ENCODE measurements at regions of chr12 and their contacts with region 1.

Region 1: DNA sequence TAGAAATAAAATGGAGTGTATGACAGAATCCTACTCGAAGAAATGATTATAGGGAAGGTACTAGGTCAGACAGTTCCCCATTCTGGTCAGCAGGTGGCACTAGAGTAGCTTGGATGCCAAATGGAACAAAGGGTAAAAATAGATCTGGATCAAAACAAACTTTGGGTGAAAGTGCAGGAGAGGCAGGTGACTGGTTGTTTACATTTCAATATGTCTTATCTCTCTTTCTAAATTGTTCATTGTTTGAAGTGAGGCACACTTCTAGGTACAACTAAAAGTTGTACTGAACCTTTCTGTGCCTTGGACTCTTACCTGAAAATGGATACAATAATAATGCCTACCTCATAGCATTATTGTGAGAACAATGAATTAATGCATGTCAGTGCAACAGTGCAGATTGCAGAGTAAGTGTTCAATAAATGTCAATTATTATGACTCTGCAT is 62.0 kb upstream of the OSBPL8 start:
- DNase-seq: peak; percentile 93
- ATAC-seq: peak; percentile 92
- H3K4me3 ChIP-seq: no peak overlapping the region; a peak in 1 of 6 replicates
- H3K27ac ChIP-seq: no peak overlapping the region
- H3K4me1 ChIP-seq: peaks cover 17% of the 10 kb centered on the region
- H3K27me3 ChIP-seq: no peaks in the 10 kb centered on the region
- CTCF ChIP-seq: peak; percentile 89
- EP300 ChIP-seq: peak in 1 of 2 experiments; percentile 82; a peak in 3 of 4 replicates
- POLR2A ChIP-seq: no peak
- RAD21 ChIP-seq: peak; percentile 92

Region 2: GRCh38 chr12:76763743-76764675 is 142.4 kb after region 1 on chr12 and contains the start of gene ZDHHC17:
- CTCF ChIA-PET with region 1: no interaction called
- POLR2A ChIA-PET with region 1: no interaction called
- in situ Hi-C with region 1: no loop called
- intact Hi-C with region 1: loop called (anchors 1 kb)
- DNase-seq: peak; percentile 87
- ATAC-seq: peak; percentile 95
- H3K4me3 ChIP-seq: peak within 1 kb of the TSS; percentile 74 to 90 (median 79)
- H3K27ac ChIP-seq: peak within 1 kb of the TSS; percentile 90
- H3K4me1 ChIP-seq: peaks cover 45% of the 10 kb centered on the region
- H3K27me3 ChIP-seq: no peaks in the 10 kb centered on the region; a peak in 1 of 5 replicates
- CTCF ChIP-seq: peak; percentile 6; the same call in 1 of the 2 replicates
- EP300 ChIP-seq: no peak
- POLR2A ChIP-seq: peak; percentile 86 to 90
- RAD21 ChIP-seq: peak; percentile 18; the same call in 1 of the 2 replicates
- total RNA-seq, gene ZDHHC17: 21.2 and 36.7 TPM in 2 replicates

Region 3: DNA sequence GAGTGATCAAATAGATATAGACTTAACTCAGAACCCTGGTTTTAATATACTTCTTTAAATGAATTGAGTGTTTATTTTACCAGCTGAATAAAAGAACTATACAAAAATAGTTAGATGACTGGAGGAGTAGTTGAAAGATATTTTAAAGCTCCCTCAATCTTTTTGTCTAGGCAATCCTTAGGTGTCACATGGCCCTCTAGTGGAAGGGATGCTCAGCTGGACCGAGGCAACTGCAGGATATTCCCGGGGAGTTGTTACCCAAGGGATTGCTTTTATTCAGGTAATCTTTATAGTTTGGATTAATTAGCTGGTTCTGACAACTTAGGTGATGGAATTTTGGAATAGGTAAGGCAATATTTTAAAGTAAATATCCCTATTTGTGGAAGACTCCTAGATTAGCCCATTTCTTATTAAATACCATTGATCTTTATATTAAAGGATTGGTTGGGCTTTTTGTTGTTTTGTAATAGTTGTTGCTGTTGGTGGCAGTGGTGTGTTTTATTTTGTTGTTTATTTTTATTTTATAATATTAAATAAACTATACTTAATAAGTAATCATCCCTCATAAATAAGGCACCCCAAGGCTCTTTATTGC is 199.4 kb after region 1 on chr12:
- CTCF ChIA-PET with region 1: interaction called, 8 read pairs
- POLR2A ChIA-PET with region 1: no interaction called
- in situ Hi-C with region 1: no loop called
- intact Hi-C with region 1: loop called (anchors 1 kb)
- DNase-seq: peak; percentile 35
- ATAC-seq: peak; percentile 83
- H3K4me3 ChIP-seq: no peak overlapping the region
- H3K27ac ChIP-seq: no peak overlapping the region
- H3K4me1 ChIP-seq: no peaks in the 10 kb centered on the region
- H3K27me3 ChIP-seq: no peaks in the 10 kb centered on the region
- CTCF ChIP-seq: peak; percentile 52
- EP300 ChIP-seq: no peak
- POLR2A ChIP-seq: no peak
- RAD21 ChIP-seq: 0 out of 2 replicates have a peak, but pooled peaks have one; percentile 12

Region 4: GRCh38 chr12:76919383-76920171 is 298.0 kb after region 1 on chr12:
- CTCF ChIA-PET with region 1: no interaction called
- POLR2A ChIA-PET with region 1: no interaction called
- in situ Hi-C with region 1: no loop called
- intact Hi-C with region 1: loop called (anchors 1 kb)
- DNase-seq: no peak
- ATAC-seq: peak; percentile 53; the same call in 2 of the 3 replicates
- H3K4me3 ChIP-seq: no peak overlapping the region
- H3K27ac ChIP-seq: no peak overlapping the region
- H3K4me1 ChIP-seq: no peaks in the 10 kb centered on the region
- H3K27me3 ChIP-seq: peaks cover 0 to 1% of the 10 kb centered on the region in 2 experiments; a peak in 1 of 5 replicates
- CTCF ChIP-seq: no peak
- EP300 ChIP-seq: no peak
- POLR2A ChIP-seq: no peak
- RAD21 ChIP-seq: no peak

Region 5: DNA sequence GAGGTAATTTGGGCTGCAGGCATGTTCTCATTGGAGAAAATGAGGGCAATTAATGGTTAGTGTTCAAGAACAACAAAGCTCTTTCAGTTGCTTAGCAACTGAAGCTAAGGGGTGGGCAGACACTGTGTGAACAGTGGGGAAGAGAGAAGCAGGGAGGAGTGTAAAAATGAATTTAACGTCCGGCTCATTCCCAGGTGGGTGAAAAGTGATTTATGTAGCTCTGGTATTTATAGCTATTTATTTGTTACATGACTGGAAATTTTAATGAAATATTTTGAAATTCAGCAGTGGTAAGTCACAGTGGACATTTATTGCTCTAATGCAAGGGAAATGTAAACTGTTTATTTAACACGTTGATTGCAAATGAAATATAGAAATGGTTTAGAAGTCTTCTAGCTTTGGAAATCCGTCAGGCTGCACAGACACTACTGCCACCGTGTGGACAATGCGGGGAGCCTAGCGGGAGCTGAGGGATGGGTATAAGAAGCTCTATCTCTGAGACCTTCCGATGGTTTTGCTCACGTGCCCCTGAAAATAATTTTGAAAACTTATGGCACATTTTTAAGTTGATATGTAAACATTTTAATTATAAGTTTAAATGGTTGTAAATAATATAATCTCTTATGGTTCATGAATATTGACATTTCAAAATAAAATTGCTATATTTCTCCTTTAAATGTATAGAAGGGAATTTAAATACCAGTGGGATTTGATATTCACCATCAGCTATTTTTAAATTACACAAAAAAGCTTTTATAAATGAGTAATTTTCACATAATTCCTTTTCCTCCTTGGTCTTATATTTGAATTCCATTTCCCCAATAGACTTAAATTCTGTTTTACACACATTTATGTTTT is 389.3 kb after region 1 on chr12:
- CTCF ChIA-PET with region 1: interaction called, 29 read pairs
- POLR2A ChIA-PET with region 1: interaction called, 3 read pairs
- in situ Hi-C with region 1: loop called (anchors 5 kb)
- intact Hi-C with region 1: loop called (anchors 1 kb)
- DNase-seq: peak; percentile 49
- ATAC-seq: peak; percentile 97
- H3K4me3 ChIP-seq: no peak overlapping the region
- H3K27ac ChIP-seq: no peak overlapping the region
- H3K4me1 ChIP-seq: peaks cover 7% of the 10 kb centered on the region; the same call in 1 of the 2 replicates
- H3K27me3 ChIP-seq: peaks cover 0 to 5% of the 10 kb centered on the region in 2 experiments; a peak in 1 of 5 replicates
- CTCF ChIP-seq: peak; percentile 81
- EP300 ChIP-seq: no peak
- POLR2A ChIP-seq: no peak
- RAD21 ChIP-seq: peak; percentile 49; the same call in 1 of the 2 replicates

Measured in HepG2 (cell line).